T-cell (primary cell): ENCODE measurements at regions of chr20 and their contacts with region 1.

Region 1: DNA sequence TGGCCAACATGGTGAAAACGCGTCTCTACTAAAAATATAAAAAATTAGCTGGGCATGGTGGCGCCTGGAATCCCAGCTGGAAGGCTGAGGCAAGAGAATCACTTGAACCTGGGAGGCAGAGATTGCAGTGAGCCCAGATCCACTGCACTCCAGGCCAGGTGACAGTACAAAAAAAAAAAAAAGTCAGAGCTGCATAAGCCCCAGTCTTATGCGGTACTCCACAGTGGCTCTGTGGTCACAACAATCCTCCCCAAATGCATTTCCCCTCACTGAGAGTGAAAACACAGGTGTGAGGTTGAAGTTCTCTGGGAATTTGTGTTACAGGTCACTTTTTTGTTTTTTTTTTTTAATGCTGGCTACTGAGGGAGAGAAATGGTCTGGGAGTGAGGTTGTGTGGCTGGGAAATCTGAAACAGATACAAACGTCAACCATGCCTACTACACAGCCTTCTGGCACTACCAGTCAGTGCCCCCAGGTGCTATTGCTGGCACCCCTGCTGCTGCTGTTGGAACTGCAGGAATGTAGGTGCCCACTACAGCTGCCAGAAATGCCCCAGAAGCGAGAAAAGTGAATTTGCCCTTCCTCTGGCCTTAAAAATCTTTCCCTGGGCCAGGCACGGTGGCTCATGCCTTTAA is 5.7 kb downstream of the MRPS26 start:
- DNase-seq: no peak
- ATAC-seq: peak in 1 of 4 experiments; percentile 48
- H3K4me3 ChIP-seq: no peak overlapping the region
- H3K4me3 Mint-ChIP-seq: no peak overlapping the region
- H3K27ac ChIP-seq: no peak overlapping the region
- H3K27ac Mint-ChIP-seq: peak overlapping the region in 1 of 2 donors; percentile 44
- H3K4me1 ChIP-seq: peaks cover 4 to 14% of the 10 kb centered on the region in 2 experiments
- H3K4me1 Mint-ChIP-seq: peaks cover 8 to 14% (median 12%) of the 10 kb centered on the region in 3 donors
- H3K27me3 ChIP-seq: no peaks in the 10 kb centered on the region
- H3K27me3 Mint-ChIP-seq: no peaks in the 10 kb centered on the region

Region 2: DNA sequence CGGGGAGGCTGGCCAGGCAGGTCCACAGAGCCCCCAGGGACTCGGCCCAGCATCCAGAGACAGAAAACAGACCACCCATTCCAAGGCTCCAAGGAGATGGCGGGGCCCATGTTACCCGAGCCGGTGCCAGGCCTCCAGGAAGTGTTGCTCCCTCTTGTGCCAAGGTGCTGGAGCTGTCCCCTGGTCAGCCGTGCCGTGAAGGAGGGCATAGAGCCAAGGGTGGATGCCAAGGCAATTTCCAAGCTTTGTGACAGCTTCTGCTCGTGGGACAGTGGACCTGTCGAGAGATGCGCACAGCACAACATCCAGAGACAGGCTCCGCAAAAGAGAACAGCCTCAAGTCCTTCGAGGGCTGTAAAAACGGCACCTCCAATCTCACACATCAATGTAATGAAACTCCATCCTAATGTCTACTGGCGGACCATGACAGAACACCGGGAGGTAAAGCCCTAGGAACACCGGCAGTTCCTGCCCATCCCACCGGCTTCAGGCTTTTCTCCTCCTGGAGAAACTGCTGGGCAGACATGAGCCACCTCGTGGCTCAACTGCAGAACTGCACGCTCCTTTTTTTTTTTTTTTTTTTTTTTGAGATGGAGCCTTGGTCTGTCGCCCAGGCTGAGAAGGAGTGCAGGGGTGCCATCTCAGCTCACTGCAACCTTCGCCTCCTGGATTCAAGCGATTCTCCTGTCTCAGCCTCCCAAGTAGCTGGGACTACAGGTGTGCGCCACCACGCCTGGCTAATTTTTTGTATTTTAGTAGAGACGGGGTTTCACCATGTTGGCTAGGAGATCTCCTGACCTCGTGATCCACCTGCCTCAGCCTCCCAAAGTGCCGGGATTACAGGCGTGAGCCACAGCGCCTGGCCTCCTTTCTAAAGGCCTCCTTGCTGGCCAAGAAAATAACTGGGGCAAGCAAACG is 63.9 kb after region 1 on chr20:
- CTCF ChIA-PET with region 1: interaction called, 5 to 16 read pairs
- POLR2A ChIA-PET with region 1: no interaction called
- DNase-seq: peak in 12 of 35 experiments; percentile 4 to 63 (median 22)
- ATAC-seq: peak; percentile 27 to 60 (median 44)
- H3K4me3 ChIP-seq: no peak overlapping the region
- H3K4me3 Mint-ChIP-seq: no peak overlapping the region
- H3K27ac ChIP-seq: no peak overlapping the region
- H3K27ac Mint-ChIP-seq: peak overlapping the region in 1 of 2 donors; percentile 66
- H3K4me1 ChIP-seq: peaks cover 0 to 30% of the 10 kb centered on the region in 2 experiments
- H3K4me1 Mint-ChIP-seq: peaks cover 11 to 27% (median 23%) of the 10 kb centered on the region in 3 donors
- H3K27me3 ChIP-seq: no peaks in the 10 kb centered on the region
- H3K27me3 Mint-ChIP-seq: no peaks in the 10 kb centered on the region